ENCODE measurements at regions of chr16 and their contacts with region 1.

Region 1: DNA sequence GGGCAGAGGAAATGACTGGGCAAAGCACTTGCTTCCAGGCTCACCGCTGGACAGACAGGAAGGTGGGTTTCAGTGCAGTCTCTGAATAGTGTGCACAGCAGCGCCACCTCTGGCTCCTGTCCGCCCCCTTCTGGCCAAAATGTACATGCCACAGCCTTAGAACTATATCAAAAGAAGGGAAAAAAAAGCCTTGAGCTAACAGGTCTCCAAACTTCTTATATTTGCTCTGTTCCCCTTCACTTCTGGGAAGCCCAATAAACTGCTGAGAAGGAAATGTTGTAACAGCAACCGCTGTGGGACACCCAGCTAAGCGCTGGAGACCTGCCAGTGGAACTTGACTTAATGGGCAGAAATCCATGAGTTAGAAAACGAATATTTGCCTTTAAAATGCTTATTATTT is 17.5 kb downstream of the COG7 start:
- DNase-seq: peak in 2 of 3 donors; percentile 48 to 53
- ATAC-seq: peak; percentile 78 to 91 (median 82)
- H3K4me3 ChIP-seq: no peak overlapping the region
- H3K27ac ChIP-seq: no peak overlapping the region
- H3K4me1 ChIP-seq: no peaks in the 10 kb centered on the region
- H3K27me3 ChIP-seq: no peaks in the 10 kb centered on the region
- CTCF ChIP-seq: peak; percentile 51 to 82 (median 71)
- POLR2A ChIP-seq: no peak

Region 2: DNA sequence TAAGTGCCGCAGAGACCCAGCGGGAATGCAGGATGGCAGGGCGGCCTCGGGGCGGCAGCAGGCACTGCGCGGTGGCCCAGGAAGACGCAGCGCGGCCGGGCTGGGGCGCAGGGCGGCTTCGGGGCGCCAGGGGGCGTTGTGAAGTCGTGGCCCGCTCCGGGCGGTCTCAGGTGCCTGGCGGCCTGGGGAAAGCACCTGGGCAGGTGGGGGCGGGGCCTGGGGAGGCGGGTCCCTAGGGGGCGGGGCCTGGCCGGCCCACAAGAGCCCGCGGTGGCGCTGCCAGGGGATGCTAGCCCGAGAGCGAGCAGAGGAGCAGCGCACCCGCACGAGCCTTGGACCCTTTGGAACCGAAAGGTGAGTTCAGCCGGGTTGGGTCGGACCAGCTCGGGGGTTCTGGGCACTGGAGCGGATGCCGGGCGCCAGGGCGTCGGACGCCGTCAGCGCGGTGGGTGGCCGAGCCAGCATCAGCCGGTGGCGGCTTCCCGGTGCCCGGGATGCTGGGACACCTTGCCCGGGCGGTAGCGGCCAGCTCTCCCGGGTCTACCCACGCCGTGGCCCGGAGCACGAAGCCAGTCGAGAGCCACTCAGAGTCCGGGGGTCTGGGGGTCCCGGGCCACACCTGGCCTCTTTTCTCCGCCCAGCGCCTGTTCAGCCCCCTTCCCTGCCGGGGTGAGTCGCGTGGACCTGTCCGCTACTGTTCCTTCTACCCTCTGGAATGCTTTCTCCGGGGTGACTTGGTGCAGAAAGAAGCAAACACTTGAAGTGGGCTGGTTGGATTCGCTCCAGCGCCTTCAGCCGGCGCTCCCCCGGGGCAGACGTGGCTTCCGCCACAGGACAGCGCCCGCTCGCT is 252.8 kb before region 1 on chr16 and contains the start of gene SCNN1G:
- intact Hi-C with region 1: loop called (anchors 10 kb)
- DNase-seq: peak; percentile 60 to 72 (median 68)
- ATAC-seq: peak; percentile 94 to 100 (median 97)
- H3K4me3 ChIP-seq: peak within 1 kb of the TSS in 2 of 3 donors; percentile 1 to 28
- H3K27ac ChIP-seq: no peak within 1 kb of the TSS
- H3K4me1 ChIP-seq: peaks cover 0 to 11% (median 0%) of the 10 kb centered on the region in 4 donors
- H3K27me3 ChIP-seq: peaks cover 0 to 7% of the 10 kb centered on the region in 2 donors
- CTCF ChIP-seq: peak; percentile 56 to 86 (median 78)
- POLR2A ChIP-seq: no peak
- total RNA-seq, gene SCNN1G: not detected

Region 3: GRCh38 chr16:23527961-23528643 is 92.6 kb after region 1 on chr16:
- intact Hi-C with region 1: no loop called
- DNase-seq: no peak
- ATAC-seq: peak in 1 of 4 donors; percentile 11
- H3K4me3 ChIP-seq: no peak overlapping the region
- H3K27ac ChIP-seq: no peak overlapping the region
- H3K4me1 ChIP-seq: no peaks in the 10 kb centered on the region
- H3K27me3 ChIP-seq: no peaks in the 10 kb centered on the region
- CTCF ChIP-seq: no peak
- POLR2A ChIP-seq: no peak

Region 4: GRCh38 chr16:23640931-23641765 is 205.6 kb after region 1 on chr16 and contains the starts of genes DCTN5 and PALB2:
- intact Hi-C with region 1: no loop called
- DNase-seq: peak; percentile 94 to 96 (median 95)
- ATAC-seq: peak; percentile 99 to 100 (median 100)
- H3K4me3 ChIP-seq: peak within 1 kb of the TSS; percentile 93 to 99 (median 94)
- H3K27ac ChIP-seq: peak within 1 kb of the TSS; percentile 53 to 70 (median 63)
- H3K4me1 ChIP-seq: peaks cover 0 to 15% (median 0%) of the 10 kb centered on the region in 4 donors
- H3K27me3 ChIP-seq: no peaks in the 10 kb centered on the region
- CTCF ChIP-seq: no peak
- POLR2A ChIP-seq: peak; percentile 43
- total RNA-seq, gene DCTN5: 10.0 to 18.9 (median 18.3) TPM
- total RNA-seq, gene PALB2: 4.3 to 7.7 (median 5.4) TPM

Measured in right lobe of liver (tissue), 6 donors.